ENCODE measurements at regions of chr22 and their contacts with region 1.

Region 1: DNA sequence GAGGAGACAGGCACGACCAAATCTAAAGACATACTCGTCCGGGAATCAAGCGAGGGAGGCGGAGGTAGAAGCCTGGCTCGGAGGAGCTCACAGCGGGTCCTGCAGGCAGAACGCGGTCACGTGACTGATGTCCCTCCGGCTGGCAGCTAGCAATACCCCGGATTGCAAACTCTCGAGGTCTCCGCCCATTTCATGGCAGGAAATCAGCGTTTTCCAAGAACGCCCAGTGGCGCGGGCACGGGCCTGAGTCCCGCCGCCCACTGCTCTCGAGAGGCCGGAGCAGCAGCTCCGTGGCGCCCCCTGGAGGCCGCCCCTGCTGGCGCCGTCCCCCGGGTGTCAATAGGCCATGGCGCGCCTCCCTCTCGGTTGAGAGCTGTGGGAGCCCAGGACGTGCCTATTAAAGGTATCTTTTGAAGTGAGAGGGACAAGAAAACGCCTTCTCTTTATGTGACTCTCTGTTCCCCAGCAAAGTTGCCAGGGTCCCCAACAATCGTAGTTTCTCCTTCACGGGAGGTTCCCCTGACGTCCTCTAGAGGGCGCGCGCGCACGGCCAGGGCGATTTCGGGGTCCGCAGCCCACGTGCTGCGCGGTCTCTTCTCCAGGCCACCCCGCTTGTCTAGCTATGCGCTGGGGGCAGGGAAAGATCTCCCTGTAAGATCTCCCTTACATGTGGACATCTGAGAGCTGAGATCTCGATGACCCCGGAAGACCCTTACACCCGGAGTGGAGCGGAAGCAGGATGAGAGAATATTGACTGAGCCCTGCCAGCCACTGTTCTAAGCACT is 37.3 kb upstream of the RBFOX2 start:
- DNase-seq: peak; percentile 92
- ATAC-seq: peak; percentile 94

Region 2: DNA sequence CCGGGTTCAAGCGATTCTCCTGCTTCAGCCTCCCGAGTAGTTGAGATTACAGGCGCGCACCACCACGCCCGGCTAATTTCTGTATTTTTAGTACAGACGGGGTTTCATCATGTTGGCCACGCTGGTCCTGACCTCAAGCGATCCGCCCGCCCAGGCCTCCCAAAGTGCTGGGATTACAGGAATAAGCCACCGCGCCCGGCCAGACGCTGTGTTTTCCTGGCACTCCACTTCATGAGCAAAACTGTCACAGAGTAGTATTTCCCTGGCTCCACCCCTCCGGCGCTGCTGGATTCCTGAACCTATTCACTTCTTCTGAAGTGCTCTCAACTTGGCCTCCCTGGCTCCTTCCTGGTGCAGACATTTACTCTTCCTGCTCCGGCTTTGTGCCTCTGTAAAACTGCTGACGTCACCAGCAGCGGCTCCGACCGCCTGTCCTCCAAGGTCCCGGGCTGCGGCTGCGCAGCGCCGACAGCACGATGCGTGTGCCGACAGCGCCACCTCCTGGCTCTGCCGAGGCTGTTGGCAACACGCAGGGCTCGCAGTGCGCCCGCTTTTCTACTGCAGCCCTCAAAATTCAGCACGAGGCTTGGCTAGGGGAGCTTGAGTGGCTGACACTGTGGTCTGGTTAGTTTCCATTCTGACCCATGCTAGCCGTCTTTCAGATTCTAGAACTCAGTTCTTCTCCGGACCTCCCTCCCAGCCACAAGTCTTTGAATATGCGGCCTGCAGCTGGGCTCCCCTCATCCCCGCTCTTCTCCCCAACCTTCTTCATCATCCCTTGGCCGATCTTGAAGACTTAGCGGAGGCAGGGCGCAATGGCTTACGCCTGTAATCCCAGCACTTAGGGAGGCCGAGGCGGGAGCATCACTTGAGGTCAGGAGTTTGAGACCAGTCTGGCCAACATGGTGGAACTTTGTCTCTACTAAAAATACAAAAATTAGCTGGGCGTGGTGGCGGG is 58.0 kb after region 1 on chr22:
- intact Hi-C with region 1: loop called (anchors 10 kb)
- DNase-seq: peak; percentile 97
- ATAC-seq: peak; percentile 99

Region 3: DNA sequence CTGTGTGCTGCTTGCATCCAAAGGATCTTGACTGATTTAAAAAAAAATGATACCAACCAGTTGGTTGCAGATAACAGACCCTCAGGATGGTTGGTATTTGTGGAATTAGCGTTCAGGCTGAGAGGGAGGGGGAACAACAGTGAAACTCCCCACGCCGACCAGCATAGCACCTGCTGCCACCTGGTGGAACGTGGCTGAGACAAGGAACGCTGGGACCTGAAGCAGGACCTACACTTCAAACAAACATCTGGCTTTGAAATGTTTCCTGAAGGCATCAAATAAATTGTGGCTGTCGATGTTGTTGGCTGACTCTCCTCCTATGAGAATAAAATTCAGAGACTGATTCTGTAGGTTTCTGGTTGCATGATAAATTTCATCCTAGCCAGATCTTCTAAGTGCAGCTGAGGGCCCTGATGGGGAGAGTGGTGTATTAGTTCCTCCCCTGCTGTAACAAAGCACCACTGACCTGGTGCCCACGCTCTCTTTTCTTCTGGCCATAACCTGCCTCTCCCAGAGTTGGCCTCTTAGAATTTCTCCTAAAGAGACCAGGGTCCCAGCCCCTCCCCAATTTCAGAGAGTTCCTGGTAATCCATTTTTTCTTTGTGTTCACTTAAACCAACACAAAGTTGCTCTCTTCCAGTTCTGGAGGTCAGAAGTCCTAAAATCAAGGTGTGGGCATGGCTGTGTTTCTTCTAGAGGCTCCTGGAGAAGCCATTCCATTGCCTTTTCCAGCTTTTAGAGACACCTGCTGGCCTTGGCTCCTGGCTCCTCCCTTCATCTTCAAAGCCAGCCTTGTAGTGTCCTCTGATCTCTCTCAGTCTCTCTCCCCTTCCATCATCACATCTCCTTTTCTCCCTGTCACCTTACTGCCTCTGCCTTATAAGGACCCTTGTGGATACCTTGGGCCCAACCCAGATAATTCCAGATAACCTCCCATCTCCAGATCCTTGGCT is 156.1 kb after region 1 on chr22:
- intact Hi-C with region 1: no loop called
- DNase-seq: peak; percentile 62
- ATAC-seq: peak; percentile 65

Region 4: GRCh38 chr22:36386900-36387751 is 321.2 kb after region 1 on chr22:
- intact Hi-C with region 1: no loop called
- DNase-seq: peak; percentile 91
- ATAC-seq: peak; percentile 13